Mammary epithelial cell (primary cell): ENCODE measurements at regions of chr1 and their contacts with region 1.

Region 1: DNA sequence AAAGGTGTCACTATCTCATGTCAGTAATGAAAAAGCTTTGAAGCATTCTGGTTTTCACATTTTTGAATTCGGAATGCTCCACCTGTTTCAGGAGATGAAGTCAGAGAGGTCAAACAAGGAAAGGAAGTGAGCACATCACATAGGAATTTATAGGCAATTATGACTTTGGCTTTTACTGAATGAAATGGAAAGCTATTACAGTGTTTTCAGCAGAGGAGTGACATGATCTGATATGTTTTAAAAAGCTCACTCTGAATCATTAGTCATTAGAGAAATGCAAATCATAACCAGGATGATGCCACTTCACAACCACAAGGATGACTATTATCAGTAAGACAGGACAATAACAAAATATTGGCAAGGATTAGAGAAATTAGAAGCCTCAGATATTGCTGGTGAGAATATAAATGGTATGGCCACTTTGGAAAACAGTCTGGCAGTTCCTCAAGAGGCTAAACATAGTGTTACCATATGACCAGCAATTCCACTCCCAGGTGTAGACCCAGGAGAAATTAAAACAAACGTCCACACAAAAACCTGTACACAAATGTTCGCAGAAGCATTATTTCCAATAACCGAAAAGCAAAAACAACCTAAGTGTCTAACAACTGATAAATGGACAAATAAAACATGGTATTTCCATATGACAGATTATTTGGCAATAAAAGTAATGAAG is 7.5 kb downstream of the TAF1A start:
- DNase-seq: peak; percentile 84
- H3K4me3 ChIP-seq: no peak overlapping the region
- H3K27ac ChIP-seq: peak overlapping the region; percentile 5
- H3K4me1 ChIP-seq: peaks cover 19% of the 10 kb centered on the region
- H3K27me3 ChIP-seq: no peaks in the 10 kb centered on the region
- CTCF ChIP-seq: no peak

Region 2: GRCh38 chr1:222357252-222357651 is 225.0 kb before region 1 on chr1:
- CTCF ChIA-PET with region 1: no interaction called
- dilution Hi-C with region 1: no loop called
- in situ Hi-C with region 1: no loop called
- intact Hi-C with region 1: no loop called
- DNase-seq: no peak
- H3K4me3 ChIP-seq: no peak overlapping the region
- H3K27ac ChIP-seq: no peak overlapping the region
- H3K4me1 ChIP-seq: no peaks in the 10 kb centered on the region
- H3K27me3 ChIP-seq: no peaks in the 10 kb centered on the region
- CTCF ChIP-seq: no peak

Region 3: DNA sequence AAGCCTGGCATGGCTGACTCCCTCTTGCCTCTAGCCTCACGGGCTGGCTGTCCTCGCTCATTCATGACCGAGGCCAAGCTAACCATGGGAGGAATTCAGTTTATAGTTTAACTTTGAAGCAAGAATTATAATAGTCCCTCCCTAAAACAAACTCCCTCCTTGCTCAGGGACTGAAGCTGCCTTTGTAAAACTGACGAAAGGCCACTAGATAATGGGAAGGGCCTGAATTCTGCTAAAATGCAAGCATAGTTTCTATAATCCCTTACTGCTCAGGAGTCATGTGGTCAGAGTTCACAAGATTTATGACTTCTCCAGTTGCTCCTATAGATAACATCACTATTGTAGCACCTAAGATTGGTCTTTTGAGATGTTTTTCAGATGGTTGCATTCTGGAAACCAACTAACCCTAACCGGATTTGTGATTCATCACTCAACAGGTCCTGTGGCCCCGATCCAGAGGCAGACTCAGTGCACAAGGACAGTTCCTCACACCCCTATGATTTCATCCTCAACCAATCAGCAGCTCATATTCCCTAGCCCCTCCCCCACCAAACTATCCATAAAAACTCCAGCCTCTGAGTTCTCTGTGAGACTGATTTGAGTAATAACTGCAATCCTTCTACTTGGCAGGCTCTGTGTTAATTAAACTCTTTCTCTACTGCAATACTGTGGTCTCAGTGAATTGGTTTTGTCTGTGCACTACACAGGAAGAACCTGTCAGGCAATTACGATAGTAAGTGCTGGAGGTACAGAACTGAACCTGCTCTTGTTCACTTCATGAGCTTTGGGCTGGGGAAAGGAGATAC is 60.7 kb before region 1 on chr1:
- CTCF ChIA-PET with region 1: no interaction called
- dilution Hi-C with region 1: loop called (anchors 5 kb)
- in situ Hi-C with region 1: no loop called
- intact Hi-C with region 1: no loop called
- DNase-seq: peak; percentile 80
- H3K4me3 ChIP-seq: no peak overlapping the region
- H3K27ac ChIP-seq: no peak overlapping the region
- H3K4me1 ChIP-seq: no peaks in the 10 kb centered on the region
- H3K27me3 ChIP-seq: no peaks in the 10 kb centered on the region
- CTCF ChIP-seq: no peak

Region 4: GRCh38 chr1:222547944-222548671 is 34.1 kb before region 1 on chr1 and contains the start of gene HHIPL2:
- CTCF ChIA-PET with region 1: no interaction called
- dilution Hi-C with region 1: no loop called
- in situ Hi-C with region 1: no loop called
- intact Hi-C with region 1: no loop called
- DNase-seq: no peak
- H3K4me3 ChIP-seq: no peak within 1 kb of the TSS
- H3K27ac ChIP-seq: no peak within 1 kb of the TSS
- H3K4me1 ChIP-seq: peaks cover 15% of the 10 kb centered on the region
- H3K27me3 ChIP-seq: no peaks in the 10 kb centered on the region
- CTCF ChIP-seq: no peak
- total RNA-seq, gene HHIPL2: not detected

Region 5: GRCh38 chr1:222691016-222691415 is 108.8 kb after region 1 on chr1:
- CTCF ChIA-PET with region 1: no interaction called
- dilution Hi-C with region 1: no loop called
- in situ Hi-C with region 1: no loop called
- intact Hi-C with region 1: no loop called
- DNase-seq: no peak
- H3K4me3 ChIP-seq: no peak overlapping the region
- H3K27ac ChIP-seq: no peak overlapping the region
- H3K4me1 ChIP-seq: no peaks in the 10 kb centered on the region
- H3K27me3 ChIP-seq: no peaks in the 10 kb centered on the region
- CTCF ChIP-seq: no peak